Activated T-helper 1 cell treated with anti-CD3 and anti-CD28 coated beads, Interleukin-12 subunit alpha, Interleukin-12 subunit beta, Interleukin-2, Interleukin-4 antibody, amounts not matched to agents 30 ng/mL and 10 ng/mL and 1 ng/mL, durations not matched to agents 14 hours and 24 hours and 36 hours (primary cell): ENCODE measurements at regions of chr22 and their contacts with region 1.

Region 1: DNA sequence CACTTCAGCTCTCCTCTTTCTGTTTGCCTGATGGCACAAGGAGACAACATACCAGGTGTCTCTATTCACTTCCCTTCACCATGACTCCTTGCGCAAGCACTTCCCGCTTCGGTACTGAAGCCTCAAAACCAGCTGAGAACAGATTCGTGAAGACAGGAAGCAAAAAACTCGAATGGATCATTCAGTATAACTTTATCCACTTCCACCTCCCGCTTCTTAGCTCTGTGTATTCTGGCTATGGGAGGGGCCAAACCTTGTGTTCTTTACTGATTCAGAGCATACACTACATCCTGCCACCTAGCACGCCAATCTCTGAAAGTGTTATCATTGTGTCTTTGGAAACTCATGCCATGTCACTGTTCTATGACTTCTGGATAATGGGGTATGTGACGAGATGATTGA is 62.2 kb upstream of the ADA2 start:
- DNase-seq: peak; percentile 51
- H3K4me3 Mint-ChIP-seq: peak overlapping the region; percentile 77
- H3K27ac Mint-ChIP-seq: peak overlapping the region; percentile 97
- H3K4me1 Mint-ChIP-seq: peaks cover 31% of the 10 kb centered on the region
- H3K27me3 Mint-ChIP-seq: peaks cover 6% of the 10 kb centered on the region

Region 2: DNA sequence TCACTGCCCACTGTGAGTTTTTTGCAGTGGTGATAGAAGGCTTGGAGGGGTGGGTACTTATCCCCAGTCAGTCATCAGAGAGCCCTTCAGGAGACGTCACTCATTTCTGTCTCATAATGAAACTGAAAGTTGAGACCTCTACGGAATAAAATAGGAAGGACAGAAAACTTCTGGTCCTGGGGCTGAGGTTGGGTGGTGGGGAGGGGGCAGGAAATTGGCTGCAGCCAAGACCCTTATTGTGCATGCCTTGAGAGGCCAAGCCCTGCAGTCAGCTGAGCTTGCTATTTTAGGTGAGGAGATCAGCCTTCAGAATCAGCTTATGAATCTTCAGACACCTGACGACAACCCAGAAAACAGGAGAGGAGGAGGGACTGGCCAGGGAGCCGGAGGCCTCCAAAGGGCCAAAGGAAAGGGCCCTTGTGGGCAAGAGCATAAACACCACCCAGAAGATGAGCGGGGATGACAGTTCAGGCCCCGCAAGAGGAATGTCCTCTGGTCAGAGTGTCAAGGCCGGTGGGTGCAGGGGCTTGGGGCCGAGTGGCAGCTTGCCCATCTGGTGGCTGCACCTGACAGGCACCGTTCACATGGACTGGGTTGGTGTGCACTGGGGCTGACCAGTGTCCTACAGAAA is 44.3 kb before region 1 on chr22:
- intact Hi-C with region 1: loop called (anchors 1 kb)
- DNase-seq: peak; percentile 52
- H3K4me3 Mint-ChIP-seq: peak overlapping the region; percentile 81
- H3K27ac Mint-ChIP-seq: peak overlapping the region; percentile 76
- H3K4me1 Mint-ChIP-seq: peaks cover 21% of the 10 kb centered on the region
- H3K27me3 Mint-ChIP-seq: no peaks in the 10 kb centered on the region